HEK293T (cell line): ENCODE measurements at regions of chr19 and their contacts with region 1.

Region 1: GRCh38 chr19:10000171-10000826 is 10.0 kb downstream of the COL5A3 start:
- DNase-seq: peak; percentile 88

Region 2: GRCh38 chr19:10027158-10027693 is 26.9 kb after region 1 on chr19:
- CTCF ChIA-PET with region 1: interaction called, 10 read pairs
- POLR2A ChIA-PET with region 1: no interaction called
- DNase-seq: no peak